Activated CD4-positive, alpha-beta memory T cell treated with anti-CD3 and anti-CD28 coated beads, Interleukin-2, amount 10 ng/mL, durations not matched to agents 7 days and 5 days (primary cell): ENCODE measurements at regions of chr15 and their contacts with region 1.

Region 1: DNA sequence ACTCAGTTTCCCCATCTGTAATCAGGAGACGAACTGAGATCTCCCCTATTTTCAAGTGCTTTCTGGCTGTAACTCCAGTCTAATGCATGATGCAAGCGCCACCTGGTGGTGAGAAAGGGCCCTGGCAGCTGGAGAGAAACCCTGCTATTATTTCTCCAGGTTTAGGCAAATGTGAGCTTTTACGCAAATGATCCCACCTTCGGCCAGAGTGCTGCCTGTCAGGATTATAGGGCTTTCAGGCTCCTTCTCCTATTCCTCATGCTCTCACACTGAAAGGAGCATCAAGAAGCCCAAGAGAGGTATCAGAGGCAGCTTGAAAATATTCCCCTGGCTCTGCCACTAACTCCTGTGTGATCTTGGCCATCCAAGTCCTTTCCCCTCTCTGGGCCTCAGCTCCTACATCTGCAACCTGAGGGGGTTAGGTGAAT is 93.9 kb upstream of the RASGRF1 start:
- DNase-seq: peak; percentile 71
- H3K4me3 Mint-ChIP-seq: no peak overlapping the region
- H3K27ac Mint-ChIP-seq: no peak overlapping the region
- H3K4me1 Mint-ChIP-seq: no peaks in the 10 kb centered on the region
- H3K27me3 Mint-ChIP-seq: peaks cover 8% of the 10 kb centered on the region

Region 2: DNA sequence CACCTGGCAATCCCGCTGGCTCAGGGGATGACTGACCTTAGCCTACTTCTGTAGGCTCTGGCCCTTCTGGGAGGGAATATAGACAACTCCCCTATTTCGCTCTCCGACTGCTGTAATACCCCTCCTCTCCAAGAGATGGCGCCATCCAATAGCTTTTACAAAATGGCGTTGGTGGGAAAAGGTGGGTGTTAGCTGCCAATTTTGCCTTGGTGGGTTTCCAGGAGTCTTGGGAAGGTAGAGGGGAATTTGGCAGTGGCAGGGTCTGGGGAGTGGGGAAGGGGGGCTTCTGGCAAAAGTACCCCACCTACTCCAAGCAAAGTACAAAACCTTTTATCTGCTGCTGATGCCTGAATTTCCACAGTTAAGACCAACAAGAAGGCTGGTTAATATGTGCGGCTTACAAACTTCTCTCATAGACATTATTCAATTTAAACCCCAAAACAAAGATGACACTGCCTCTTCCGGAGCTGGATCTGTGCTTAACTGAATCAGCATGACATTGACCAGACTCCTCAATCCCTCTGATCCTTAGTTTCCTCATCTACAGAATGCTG is 156.0 kb before region 1 on chr15:
- CTCF ChIA-PET with region 1: interaction called, 57 read pairs
- POLR2A ChIA-PET with region 1: no interaction called
- DNase-seq: peak; percentile 49
- H3K4me3 Mint-ChIP-seq: no peak overlapping the region
- H3K27ac Mint-ChIP-seq: no peak overlapping the region
- H3K4me1 Mint-ChIP-seq: peaks cover 2% of the 10 kb centered on the region
- H3K27me3 Mint-ChIP-seq: peaks cover 1% of the 10 kb centered on the region

Region 3: DNA sequence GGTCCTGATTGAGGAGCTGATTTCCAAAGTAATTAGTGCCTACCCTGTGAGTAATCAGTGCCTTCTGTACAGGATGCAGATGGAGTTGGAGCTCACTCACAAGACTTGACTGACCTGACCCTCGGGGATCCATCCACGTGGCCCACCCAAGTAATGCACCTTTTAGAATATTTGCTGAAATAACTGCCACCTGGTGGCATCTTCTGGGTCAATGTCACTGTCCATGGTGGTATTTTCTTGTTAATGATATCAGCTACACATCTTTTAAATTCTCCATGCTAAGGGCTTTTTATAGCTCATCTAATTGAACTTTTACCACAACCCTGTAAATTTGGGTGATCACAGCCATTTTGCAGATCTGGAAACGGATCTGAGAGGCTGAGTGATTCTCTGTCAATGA is 23.7 kb after region 1 on chr15:
- CTCF ChIA-PET with region 1: interaction called, 20 read pairs
- POLR2A ChIA-PET with region 1: no interaction called
- DNase-seq: no peak
- H3K4me3 Mint-ChIP-seq: no peak overlapping the region
- H3K27ac Mint-ChIP-seq: no peak overlapping the region
- H3K4me1 Mint-ChIP-seq: no peaks in the 10 kb centered on the region
- H3K27me3 Mint-ChIP-seq: peaks cover 46% of the 10 kb centered on the region

Region 4: GRCh38 chr15:79673416-79674123 is 489.1 kb after region 1 on chr15:
- CTCF ChIA-PET with region 1: no interaction called
- POLR2A ChIA-PET with region 1: no interaction called
- DNase-seq: no peak
- H3K4me3 Mint-ChIP-seq: no peak overlapping the region
- H3K27ac Mint-ChIP-seq: no peak overlapping the region
- H3K4me1 Mint-ChIP-seq: peaks cover 5% of the 10 kb centered on the region
- H3K27me3 Mint-ChIP-seq: peaks cover 11% of the 10 kb centered on the region